ENCODE measurements at regions of chr14 and their contacts with region 1.

Region 1: GRCh38 chr14:58327019-58327418 is 28.7 kb downstream of the ARID4A start:
- DNase-seq: no peak
- H3K4me3 ChIP-seq: no peak overlapping the region
- H3K27ac ChIP-seq: no peak overlapping the region
- H3K4me1 ChIP-seq: peaks cover 10 to 19% (median 12%) of the 10 kb centered on the region in 4 experiments
- H3K27me3 ChIP-seq: no peaks in the 10 kb centered on the region

Region 2: DNA sequence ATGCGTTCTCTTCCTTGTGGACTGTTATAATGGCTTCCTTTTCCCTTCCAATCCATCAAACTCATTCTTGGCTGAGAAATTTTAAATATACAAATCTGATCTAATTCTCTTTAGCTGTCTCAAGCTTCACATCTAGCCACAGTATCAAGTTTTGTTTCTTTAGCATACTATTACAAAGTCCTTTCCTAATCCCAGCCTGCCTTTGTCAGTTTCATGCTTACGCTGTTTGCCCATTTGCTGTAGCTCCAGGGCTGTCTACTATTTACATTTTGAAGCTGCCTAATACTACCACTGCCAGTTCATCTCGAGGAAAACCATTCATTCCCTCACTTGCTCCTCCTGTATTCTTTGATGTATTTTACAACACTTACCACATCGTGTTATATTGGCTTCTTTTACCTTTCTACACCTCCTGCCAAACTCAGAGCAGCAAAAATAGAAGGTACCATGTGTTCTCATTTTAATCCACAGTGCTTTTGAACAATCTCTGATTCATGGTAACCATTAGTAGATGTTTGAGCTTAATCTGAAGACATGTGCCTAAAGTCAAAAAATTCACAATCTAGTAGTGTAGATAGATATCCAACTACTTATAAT is 14.2 kb after region 1 on chr14:
- CTCF ChIA-PET with region 1: interaction called, 11 read pairs
- POLR2A ChIA-PET with region 1: no interaction called
- DNase-seq: no peak
- H3K4me3 ChIP-seq: no peak overlapping the region
- H3K27ac ChIP-seq: no peak overlapping the region
- H3K4me1 ChIP-seq: no peaks in the 10 kb centered on the region
- H3K27me3 ChIP-seq: no peaks in the 10 kb centered on the region